Ascending aorta (tissue), 2 donors: ENCODE measurements at regions of chr20 and their contacts with region 1.

Region 1: DNA sequence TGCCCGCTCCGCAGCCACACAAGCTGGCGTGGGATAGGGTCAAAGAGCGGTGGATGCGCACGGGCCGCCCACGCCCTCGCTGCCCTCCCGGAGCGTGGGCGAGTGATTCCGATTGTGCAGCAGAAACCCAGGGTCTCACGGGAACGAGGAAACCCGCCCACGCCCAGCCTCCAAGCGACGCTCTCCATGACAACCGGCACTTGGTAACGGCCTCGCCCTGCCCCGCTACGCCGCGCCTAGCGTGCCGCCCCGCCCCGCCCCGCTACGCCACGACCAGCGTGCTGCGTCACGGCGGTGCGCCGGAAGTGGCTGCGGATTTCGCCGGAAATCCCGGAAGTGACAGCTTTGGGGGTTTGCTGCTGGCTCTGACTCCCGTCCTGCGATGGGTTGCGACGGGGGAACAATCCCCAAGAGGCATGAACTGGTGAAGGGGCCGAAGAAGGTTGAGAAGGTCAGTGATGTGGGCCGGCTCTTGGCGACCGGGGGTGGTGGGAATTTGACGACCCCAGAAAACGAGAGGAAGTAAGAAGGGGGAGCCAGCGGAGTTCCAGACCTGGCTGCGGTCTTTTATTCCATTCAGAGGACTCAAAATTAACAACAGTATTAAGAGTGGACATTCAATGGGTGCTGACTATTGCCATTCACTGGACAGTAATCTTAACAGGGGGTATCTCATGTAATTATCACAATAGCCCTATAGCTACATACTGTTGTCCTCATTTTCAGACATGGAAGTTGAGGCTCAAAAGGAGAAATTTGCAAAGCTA is at the start of gene RTF2:
- DNase-seq: peak; percentile 68 to 96
- H3K4me3 ChIP-seq: peak within 1 kb of the TSS; percentile 86 to 90
- H3K27ac ChIP-seq: peak within 1 kb of the TSS; percentile 83 to 91
- H3K4me1 ChIP-seq: peaks cover 0 to 20% of the 10 kb centered on the region in 2 donors
- H3K27me3 ChIP-seq: no peaks in the 10 kb centered on the region
- CTCF ChIP-seq: no peak
- total RNA-seq, gene RTF2: 54.5 TPM

Region 2: GRCh38 chr20:56358596-56359211 is 109.8 kb before region 1 on chr20 and contains the start of gene FAM210B:
- intact Hi-C with region 1: loop called (anchors 1 kb)
- DNase-seq: peak; percentile 31 to 92
- H3K4me3 ChIP-seq: peak within 1 kb of the TSS; percentile 90 to 93
- H3K27ac ChIP-seq: peak within 1 kb of the TSS; percentile 75 to 86
- H3K4me1 ChIP-seq: peaks cover 6 to 13% of the 10 kb centered on the region in 2 donors
- H3K27me3 ChIP-seq: no peaks in the 10 kb centered on the region
- CTCF ChIP-seq: no peak
- total RNA-seq, gene FAM210B: 17.9 TPM

Region 3: DNA sequence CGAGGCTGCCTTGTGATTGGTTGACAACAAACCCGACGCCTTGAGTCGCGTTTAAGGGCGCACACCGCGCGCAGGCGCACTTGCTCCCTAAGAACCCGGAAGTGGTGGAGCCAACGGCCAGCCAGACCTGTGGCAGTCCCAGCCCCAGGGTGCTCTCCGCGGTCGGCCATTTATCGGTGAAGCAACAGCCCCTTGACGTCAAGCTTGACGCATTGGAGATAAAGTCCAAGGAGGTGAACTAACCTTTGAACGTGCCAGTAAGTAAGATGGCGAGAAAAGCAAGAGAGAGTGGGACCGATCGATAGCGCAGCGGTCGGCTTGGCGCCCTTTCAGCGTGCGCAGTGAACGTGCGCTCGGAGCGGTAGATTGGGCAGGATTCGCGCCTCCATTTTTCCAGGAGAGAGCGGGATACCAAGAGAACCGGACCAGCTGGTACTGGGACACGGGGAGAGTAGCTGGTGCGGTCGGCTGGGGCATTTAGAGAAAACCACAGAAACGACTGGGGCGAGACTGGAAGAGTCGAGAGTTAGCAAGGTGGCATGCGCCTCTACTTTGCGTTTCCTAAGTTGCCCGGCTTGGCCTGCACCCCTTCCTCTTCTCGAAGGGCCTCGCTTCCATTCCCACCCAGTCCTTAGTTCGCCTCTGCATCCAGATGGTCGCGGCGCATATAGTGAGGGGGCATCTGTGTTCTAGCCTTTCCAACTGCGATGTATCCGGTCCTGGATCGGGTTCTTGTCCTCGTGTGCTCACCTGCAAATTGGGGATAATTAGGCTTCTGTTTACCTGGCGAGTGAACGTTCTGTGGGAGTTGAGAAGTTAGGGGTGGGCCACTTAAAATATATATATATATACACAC is 76.0 kb before region 1 on chr20 and contains the start of gene CSTF1:
- intact Hi-C with region 1: loop called (anchors 1 kb)
- DNase-seq: peak; percentile 99 to 100
- H3K4me3 ChIP-seq: peak within 1 kb of the TSS; percentile 63 to 78
- H3K27ac ChIP-seq: peak within 1 kb of the TSS; percentile 87 to 90
- H3K4me1 ChIP-seq: peaks cover 0 to 17% of the 10 kb centered on the region in 2 donors
- H3K27me3 ChIP-seq: no peaks in the 10 kb centered on the region
- CTCF ChIP-seq: no peak
- total RNA-seq, gene CSTF1: 13.7 TPM